Breast epithelium (tissue), 4 donors: ENCODE measurements at regions of chr9 and their contacts with region 1.

Region 1: DNA sequence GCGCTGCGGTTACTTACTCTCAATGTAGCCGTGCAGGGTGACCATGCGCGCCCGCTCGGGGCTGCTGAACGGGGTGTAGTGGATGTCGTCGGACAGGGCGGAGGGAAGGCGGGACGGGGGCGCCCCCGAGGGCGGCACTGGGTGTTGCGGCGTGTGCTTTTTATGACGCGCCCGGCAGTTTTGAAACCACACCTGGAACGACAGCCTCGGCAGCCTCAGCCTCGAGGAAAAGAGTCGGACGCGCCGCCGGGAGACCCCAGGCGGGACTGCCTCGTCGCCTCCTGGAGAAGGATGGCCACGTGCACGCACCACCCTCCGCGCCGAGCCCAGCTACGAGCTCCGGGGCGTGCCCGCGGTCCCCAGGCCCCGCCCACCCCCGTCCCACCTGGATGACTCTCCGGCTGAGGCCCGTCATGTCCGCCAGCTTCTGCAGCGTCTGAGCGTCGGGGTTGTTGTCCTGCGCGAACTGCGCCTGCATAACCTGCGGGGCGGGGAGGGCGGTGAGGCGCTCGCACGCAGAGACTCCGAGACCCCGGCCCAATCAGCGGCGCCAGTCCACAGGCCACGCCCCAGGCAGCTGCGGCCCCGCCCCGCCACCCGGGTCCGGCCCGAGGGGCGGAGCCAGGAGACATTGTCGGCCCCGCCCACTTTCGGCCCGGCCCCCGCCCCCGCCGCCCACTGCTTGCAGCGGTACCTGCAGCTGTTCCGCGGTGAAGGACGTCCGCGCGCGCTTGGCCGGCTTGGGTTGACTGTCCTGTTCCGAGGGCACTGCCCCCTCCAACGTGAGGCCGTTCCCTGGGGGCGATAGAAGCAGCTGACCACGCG is 15.0 kb downstream of the LHX6 start:
- DNase-seq: no peak
- H3K4me3 ChIP-seq: peak overlapping the region; percentile 10 to 74 (median 49)
- H3K27ac ChIP-seq: no peak overlapping the region
- H3K4me1 ChIP-seq: peaks cover under 1 to 6% of the 10 kb centered on the region in 2 donors
- H3K27me3 ChIP-seq: peaks cover 4 to 66% of the 10 kb centered on the region in 2 donors
- CTCF ChIP-seq: no peak
- POLR2A ChIP-seq: no peak

Region 2: GRCh38 chr9:122236681-122237080 is 22.9 kb after region 1 on chr9:
- intact Hi-C with region 1: loop called (anchors 1 kb)
- DNase-seq: no peak
- H3K4me3 ChIP-seq: no peak overlapping the region
- H3K27ac ChIP-seq: no peak overlapping the region
- H3K4me1 ChIP-seq: no peaks in the 10 kb centered on the region
- H3K27me3 ChIP-seq: peaks cover 0 to 1% of the 10 kb centered on the region in 2 donors
- CTCF ChIP-seq: no peak
- POLR2A ChIP-seq: no peak

Region 3: DNA sequence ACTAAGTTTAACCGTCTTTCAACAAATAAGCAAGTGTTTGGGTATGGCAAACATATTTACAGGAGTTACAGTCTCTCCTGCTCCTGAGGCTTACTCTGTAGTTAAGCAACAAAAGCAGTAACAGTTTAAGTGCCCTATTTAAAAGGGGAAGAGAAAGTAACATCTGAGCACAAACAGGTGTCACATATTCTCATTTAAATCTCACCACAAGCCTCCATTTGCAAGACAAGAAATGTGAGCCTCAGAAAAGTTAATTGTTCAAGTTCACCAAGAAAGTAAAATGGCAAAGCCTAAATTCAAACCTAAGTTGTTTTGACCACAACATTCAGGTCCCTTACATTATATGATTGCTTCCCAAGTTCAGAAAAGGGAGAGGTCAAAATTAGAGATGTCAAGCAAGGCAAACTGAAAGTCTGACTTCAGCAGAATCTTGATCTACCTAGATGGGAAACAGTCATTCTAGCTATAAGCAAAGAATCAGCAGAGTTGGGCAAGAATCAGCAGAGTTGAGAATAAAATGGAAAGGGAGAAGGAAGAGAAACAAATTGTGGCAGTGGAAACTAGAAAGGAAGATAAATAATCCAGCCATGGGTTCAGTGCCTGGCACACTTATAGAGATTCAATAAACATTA is 961.2 kb after region 1 on chr9:
- intact Hi-C with region 1: no loop called
- DNase-seq: no peak
- H3K4me3 ChIP-seq: no peak overlapping the region
- H3K27ac ChIP-seq: peak overlapping the region in 1 of 2 donors; percentile 65
- H3K4me1 ChIP-seq: no peaks in the 10 kb centered on the region
- H3K27me3 ChIP-seq: no peaks in the 10 kb centered on the region
- CTCF ChIP-seq: no peak
- POLR2A ChIP-seq: no peak